SK-N-SH (cell line): ENCODE measurements at regions of chr14 and their contacts with region 1.

Region 1: DNA sequence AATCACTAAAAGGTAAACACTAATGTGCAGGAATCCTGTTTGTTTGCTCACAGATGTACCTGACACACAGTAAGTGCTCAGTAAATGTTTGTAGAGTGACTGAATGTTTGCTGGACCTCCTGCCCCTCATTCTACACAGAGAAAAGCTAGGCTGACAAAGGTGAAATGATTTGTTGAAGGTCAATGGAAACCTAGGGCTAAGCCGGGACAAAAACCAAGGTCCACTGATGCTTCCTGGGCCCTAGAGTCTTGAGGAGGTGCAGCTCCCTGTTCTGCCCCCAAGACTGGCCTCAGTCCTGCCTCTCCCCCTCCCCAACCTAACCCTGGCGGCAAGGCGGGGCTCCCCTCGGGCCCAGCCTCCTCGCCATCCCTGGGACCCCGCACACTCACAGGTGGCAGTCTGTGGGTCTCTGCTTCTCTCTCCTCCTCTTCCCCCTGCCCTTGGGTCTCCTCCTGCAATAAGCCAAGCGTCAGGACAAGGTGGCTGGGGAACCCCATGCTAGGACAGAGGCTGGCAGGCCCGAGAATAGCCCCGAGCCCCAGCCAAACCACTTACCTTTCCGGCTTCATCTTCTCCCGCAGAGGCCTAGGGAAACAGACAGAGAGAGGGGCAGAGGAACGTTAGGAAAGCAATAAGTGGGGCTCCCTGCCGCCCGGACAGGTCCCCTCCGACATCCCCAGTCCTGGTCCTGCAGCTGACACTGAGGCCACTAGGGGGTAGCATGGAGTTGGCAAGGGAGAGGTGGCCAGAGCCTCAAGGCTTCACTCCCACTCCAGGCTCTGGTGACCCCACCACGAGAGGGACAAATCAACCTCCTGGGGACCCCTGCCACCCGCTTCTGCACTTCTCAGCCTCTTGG is 9.3 kb downstream of the PGF start:
- DNase-seq: peak; percentile 95
- H3K4me3 ChIP-seq: peak overlapping the region in 1 of 2 experiments; percentile 23; a peak in 1 of 4 replicates
- H3K27ac ChIP-seq: peak overlapping the region in 1 of 2 experiments; percentile 11; a peak in 1 of 4 replicates
- H3K4me1 ChIP-seq: peaks cover 6 to 8% of the 10 kb centered on the region in 2 experiments; a peak in 1 of 4 replicates
- H3K27me3 ChIP-seq: no peaks in the 10 kb centered on the region
- CTCF ChIP-seq: peak; percentile 88
- EP300 ChIP-seq: no peak
- RAD21 ChIP-seq: peak; percentile 92

Region 2: DNA sequence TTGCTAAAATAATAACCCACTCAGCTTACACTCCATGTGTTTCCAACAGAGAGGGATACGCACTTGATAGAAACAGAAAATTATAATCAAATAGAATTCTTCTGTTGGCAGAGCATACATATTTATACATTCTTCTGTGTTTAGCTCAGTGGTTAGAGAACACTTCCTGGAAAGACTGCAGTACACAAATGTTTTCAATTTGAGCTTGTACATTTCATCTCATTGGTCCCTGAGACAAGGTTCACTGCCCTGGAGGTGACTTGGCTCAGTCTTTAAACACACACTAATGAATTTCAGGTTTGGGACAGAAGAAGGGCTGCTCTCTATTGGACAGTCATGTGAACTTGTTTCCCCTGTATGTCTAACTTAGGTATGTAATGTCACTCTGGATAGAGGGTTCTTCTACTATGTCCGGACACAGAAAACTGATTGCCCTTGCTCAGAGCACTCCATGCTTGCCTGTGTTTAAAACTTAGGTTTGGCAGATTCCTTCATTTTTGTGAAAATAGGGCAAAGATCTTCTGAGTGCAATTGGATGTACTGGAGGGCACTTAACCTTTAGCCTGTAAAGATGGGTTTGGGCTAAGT is 93.0 kb before region 1 on chr14:
- CTCF ChIA-PET with region 1: interaction called, 13 read pairs
- POLR2A ChIA-PET with region 1: no interaction called
- DNase-seq: no peak
- H3K4me3 ChIP-seq: no peak overlapping the region
- H3K27ac ChIP-seq: peak overlapping the region; percentile 69 to 90; a peak in 3 of 4 replicates
- H3K4me1 ChIP-seq: peaks cover 1 to 32% of the 10 kb centered on the region in 2 experiments; a peak in 3 of 4 replicates
- H3K27me3 ChIP-seq: no peaks in the 10 kb centered on the region
- CTCF ChIP-seq: 0 out of 2 replicates have a peak, but pooled peaks have one; percentile 7
- EP300 ChIP-seq: peak; percentile 46 to 63; a peak in 3 of 4 replicates
- RAD21 ChIP-seq: no peak

Region 3: DNA sequence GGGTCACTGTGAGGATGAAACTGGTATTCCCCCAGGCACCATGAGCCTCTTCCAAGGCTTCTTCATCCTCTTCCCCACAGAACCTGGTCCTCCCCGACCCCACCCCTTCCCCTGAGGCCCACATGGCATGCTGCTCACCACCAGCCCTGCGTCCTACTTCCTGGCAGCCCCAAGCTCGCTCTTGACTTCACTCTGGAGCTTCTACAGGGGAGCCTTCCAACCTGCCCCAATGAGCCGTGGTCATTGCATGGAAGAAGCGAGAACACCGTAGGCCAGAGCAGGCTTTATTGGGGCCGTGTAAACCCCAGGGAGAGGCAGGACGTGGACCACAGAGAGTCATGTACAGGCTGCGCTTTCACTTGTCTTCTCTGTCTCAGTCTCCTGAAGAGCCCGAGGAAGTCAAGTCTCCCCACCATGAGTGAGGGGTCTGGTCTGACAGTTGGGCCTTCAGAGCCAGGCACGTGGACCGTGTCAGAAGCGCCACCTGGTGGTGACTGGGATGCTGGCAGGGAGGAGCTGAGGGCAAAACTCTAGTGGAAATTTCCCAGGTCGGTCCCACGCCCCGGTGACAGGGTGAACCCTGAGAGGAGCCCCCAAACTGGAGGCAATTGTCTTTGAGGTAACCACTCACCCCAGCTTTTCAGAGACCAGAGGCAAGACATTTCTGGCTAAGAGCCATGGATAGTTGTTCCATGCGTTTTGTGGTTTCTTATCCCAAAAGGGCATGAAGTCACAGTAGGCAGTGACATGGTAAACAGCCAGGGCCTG is 40.5 kb before region 1 on chr14:
- CTCF ChIA-PET with region 1: interaction called, 20 read pairs
- POLR2A ChIA-PET with region 1: no interaction called
- DNase-seq: peak; percentile 86
- H3K4me3 ChIP-seq: no peak overlapping the region; a peak in 1 of 4 replicates
- H3K27ac ChIP-seq: peak overlapping the region in 1 of 2 experiments; percentile 39; a peak in 2 of 4 replicates
- H3K4me1 ChIP-seq: no peaks in the 10 kb centered on the region; a peak in 1 of 4 replicates
- H3K27me3 ChIP-seq: no peaks in the 10 kb centered on the region
- CTCF ChIP-seq: peak; percentile 97
- EP300 ChIP-seq: no peak
- RAD21 ChIP-seq: peak; percentile 73

Region 4: DNA sequence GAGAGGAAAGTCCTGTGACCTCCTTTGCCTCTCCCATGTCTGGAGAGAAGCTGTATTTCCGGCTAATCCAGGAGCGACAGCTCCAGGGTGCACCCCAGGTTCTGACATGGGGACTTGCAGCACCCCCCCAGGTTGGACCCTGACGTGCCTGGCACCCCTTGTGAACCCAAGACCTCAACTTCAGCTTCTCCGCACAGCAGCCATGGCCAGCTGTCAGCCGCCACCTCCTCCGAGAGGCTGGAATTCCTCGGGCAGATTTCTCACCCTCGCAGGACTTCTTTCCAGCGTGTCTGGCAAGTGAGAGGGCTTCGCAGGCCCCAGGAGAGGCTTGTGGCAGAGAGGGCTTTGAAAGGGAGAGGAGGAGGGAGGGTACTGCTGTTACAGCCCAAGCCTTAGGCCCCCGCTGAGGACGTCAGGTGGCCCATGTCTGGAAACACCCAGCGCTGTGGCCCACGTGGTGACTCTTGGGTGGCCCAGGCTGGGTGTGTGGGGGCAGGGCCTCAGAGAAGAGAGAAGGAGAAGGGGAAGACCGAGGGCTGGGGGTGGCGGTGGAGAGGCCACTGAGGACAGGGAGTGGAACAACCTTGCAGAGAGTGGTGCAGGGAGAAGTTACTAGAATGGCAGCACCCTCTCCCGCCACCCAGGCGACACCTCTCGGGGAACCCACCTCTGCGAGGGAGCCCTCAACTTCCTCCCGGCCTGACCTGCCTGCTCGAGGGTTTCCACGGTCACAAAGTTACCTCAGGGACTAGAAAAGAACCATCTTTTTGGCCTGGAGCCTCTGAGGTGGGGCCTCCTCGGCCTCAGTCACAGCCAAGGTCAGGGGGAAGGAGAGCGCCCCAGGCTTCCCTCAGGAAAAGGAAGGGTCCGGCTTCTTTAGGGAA is 11.3 kb before region 1 on chr14:
- CTCF ChIA-PET with region 1: interaction called, 34 read pairs
- POLR2A ChIA-PET with region 1: no interaction called
- DNase-seq: no peak
- H3K4me3 ChIP-seq: no peak overlapping the region
- H3K27ac ChIP-seq: no peak overlapping the region
- H3K4me1 ChIP-seq: peaks cover 2 to 3% of the 10 kb centered on the region in 2 experiments; a peak in 3 of 4 replicates
- H3K27me3 ChIP-seq: no peaks in the 10 kb centered on the region
- CTCF ChIP-seq: no peak
- EP300 ChIP-seq: no peak
- RAD21 ChIP-seq: no peak

Region 5: GRCh38 chr14:75022655-75023054 is 76.6 kb after region 1 on chr14:
- CTCF ChIA-PET with region 1: interaction called, 18 read pairs
- POLR2A ChIA-PET with region 1: no interaction called
- DNase-seq: peak; percentile 49
- H3K4me3 ChIP-seq: no peak overlapping the region
- H3K27ac ChIP-seq: no peak overlapping the region
- H3K4me1 ChIP-seq: no peaks in the 10 kb centered on the region
- H3K27me3 ChIP-seq: no peaks in the 10 kb centered on the region
- CTCF ChIP-seq: peak; percentile 46
- EP300 ChIP-seq: no peak
- RAD21 ChIP-seq: peak; percentile 52

Region 6: DNA sequence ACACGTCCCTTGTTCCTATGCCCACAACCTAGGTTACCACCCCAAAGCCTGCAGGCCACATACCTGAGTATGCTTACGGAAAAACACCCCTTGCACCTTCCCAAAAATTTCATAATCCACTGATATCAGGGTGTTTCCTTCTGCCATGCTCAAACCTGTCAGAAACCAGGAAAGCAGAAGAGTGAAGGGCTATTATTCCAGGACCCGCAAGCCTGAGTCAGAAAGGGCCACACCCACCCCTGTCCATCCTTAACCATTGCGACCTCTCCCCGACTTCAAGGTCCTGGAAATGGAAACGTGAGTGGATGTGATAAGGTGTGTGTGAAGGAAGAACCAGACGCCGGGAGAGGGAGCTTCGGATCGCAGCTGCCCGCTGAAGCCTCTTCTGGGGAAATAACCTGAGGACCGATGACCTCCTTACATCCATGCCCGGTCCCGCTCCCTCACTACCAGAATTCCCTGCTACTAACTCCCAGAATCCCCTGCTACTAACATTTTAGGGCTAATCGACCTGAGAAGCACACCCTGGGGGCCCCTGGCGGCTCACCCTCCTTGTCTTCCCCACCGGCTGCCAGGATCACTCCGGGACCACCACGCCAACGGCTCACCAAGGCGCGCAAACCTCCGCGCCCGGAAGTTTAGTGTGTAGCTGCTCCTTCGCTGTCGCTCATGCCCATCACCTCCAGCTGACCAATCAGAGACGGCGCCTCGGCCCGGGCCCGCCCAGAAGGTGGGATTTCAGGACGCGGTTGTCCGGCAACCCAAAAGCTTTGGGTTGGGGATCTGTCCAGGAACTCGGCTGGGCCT is 117.6 kb after region 1 on chr14 and contains the start of gene ACYP1:
- CTCF ChIA-PET with region 1: interaction called, 13 read pairs
- POLR2A ChIA-PET with region 1: no interaction called
- DNase-seq: peak; percentile 93
- H3K4me3 ChIP-seq: peak within 1 kb of the TSS; percentile 71 to 78
- H3K27ac ChIP-seq: peak within 1 kb of the TSS; percentile 10 to 67; a peak in 3 of 4 replicates
- H3K4me1 ChIP-seq: peaks cover 0 to 8% of the 10 kb centered on the region in 2 experiments; a peak in 1 of 4 replicates
- H3K27me3 ChIP-seq: no peaks in the 10 kb centered on the region
- CTCF ChIP-seq: 0 out of 2 replicates have a peak, but pooled peaks have one; percentile 7
- EP300 ChIP-seq: no peak
- RAD21 ChIP-seq: no peak
- polyA plus RNA-seq, gene ACYP1: 53.5 and 70.1 TPM in 2 replicates

Region 7: GRCh38 chr14:75081660-75082229 is 135.7 kb after region 1 on chr14:
- CTCF ChIA-PET with region 1: interaction called, 290 read pairs
- POLR2A ChIA-PET with region 1: no interaction called
- DNase-seq: no peak
- H3K4me3 ChIP-seq: no peak overlapping the region
- H3K27ac ChIP-seq: peak overlapping the region; percentile 11 to 41; a peak in 3 of 4 replicates
- H3K4me1 ChIP-seq: peaks cover 0 to 16% of the 10 kb centered on the region in 2 experiments; a peak in 2 of 4 replicates
- H3K27me3 ChIP-seq: no peaks in the 10 kb centered on the region
- CTCF ChIP-seq: no peak
- EP300 ChIP-seq: no peak
- RAD21 ChIP-seq: no peak